B cell (primary cell): ENCODE measurements at regions of chr2 and their contacts with region 1.

Region 1: DNA sequence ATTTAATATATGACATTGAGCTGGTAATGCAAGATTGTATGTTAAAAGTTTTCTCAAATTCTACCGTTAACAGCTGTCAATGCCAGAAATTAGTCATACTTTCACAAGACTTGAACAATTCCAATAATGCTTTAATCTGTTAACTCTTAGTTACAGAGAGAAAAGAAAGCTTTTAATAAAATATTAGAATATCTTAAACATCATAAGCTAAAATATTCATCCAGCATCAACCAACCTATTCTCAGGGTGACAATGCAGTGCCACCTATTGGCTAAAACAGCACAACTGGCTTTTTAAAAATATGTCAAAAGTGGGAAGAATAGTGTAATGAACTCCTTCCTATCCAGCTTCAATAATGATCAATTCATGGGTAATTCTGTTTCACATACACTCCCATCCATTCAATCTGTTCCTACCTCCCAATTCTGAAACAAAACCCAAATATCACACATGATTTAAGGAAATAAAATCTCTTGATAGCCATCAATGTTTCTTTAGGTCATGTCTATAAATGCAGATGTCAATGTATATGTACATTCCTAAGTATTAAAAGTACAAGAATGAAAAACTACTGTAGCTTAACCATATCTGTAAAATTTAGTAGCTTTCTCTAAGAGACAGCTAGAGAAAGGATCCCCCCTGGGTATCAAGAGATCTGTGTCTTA is 79.8 kb upstream of the CCDC141 start:
- DNase-seq: peak; percentile 37
- ATAC-seq: no peak
- H3K4me3 ChIP-seq: no peak overlapping the region
- H3K4me3 Mint-ChIP-seq: no peak overlapping the region
- H3K27ac ChIP-seq: no peak overlapping the region
- H3K27ac Mint-ChIP-seq: no peak overlapping the region
- H3K4me1 ChIP-seq: no peaks in the 10 kb centered on the region
- H3K4me1 Mint-ChIP-seq: no peaks in the 10 kb centered on the region
- H3K27me3 ChIP-seq: no peaks in the 10 kb centered on the region
- H3K27me3 Mint-ChIP-seq: no peaks in the 10 kb centered on the region
- CTCF ChIP-seq: peak; percentile 82

Region 2: DNA sequence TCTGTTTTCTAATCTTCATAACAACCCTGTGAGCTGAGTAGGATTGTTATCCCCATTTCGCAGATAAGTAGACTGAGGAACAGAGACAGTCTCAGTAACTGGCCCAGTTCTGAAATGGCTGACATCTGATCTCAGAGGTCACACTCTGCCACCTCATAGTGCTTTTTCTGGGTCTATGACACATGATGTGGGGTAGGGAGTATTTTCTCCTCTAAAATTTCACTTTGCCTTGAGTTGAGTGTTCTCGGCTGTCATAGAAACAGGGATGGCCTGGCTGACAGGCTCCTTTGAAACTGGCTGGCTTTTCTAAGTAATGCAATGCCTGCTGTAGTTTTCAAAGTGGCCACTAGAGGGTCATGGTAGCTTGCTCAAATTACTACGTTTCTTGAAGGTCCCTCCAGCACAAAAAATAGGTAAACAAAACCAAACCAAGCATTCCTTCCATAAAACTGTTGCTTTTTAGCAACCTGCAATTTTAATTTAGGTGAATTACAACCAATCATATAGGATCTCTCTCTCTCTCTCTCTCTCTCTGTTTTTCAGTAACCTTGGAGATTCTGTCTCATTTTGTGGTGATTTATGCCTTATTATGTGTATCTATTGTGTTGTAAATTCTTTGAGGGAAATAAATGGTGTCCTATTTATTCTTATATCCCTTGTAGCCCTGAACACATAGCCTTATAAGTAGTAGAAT is 238.3 kb before region 1 on chr2:
- CTCF ChIA-PET with region 1: interaction called, 141 read pairs
- POLR2A ChIA-PET with region 1: no interaction called
- intact Hi-C with region 1: loop called (anchors 1 kb)
- DNase-seq: peak; percentile 72
- ATAC-seq: peak; percentile 61
- H3K4me3 ChIP-seq: no peak overlapping the region
- H3K4me3 Mint-ChIP-seq: no peak overlapping the region
- H3K27ac ChIP-seq: no peak overlapping the region
- H3K27ac Mint-ChIP-seq: no peak overlapping the region
- H3K4me1 ChIP-seq: no peaks in the 10 kb centered on the region
- H3K4me1 Mint-ChIP-seq: no peaks in the 10 kb centered on the region
- H3K27me3 ChIP-seq: no peaks in the 10 kb centered on the region
- H3K27me3 Mint-ChIP-seq: no peaks in the 10 kb centered on the region
- CTCF ChIP-seq: peak; percentile 98

Region 3: DNA sequence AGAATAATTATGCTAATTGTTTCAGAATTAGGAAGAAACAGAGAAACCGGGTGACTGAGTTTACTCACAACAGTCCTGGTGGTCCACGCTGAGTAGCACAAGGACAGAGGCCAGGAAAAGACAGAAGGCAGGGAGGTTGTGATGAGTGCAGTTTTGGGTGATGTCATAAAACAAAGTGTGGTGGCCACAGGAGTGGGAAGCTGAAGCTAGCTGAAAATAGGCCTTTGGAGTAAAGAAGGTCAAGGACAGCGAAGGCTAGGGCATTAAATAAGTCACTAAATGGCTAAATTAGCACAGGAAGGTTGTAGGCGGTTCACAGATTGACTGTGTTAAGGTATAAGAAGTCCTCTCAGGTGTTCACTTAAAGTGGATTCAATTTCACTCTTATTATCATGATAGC is 201.6 kb before region 1 on chr2:
- CTCF ChIA-PET with region 1: interaction called, 16 read pairs
- POLR2A ChIA-PET with region 1: no interaction called
- intact Hi-C with region 1: no loop called
- DNase-seq: no peak
- ATAC-seq: no peak
- H3K4me3 ChIP-seq: no peak overlapping the region
- H3K4me3 Mint-ChIP-seq: peak overlapping the region; percentile 8
- H3K27ac ChIP-seq: no peak overlapping the region
- H3K27ac Mint-ChIP-seq: no peak overlapping the region
- H3K4me1 ChIP-seq: no peaks in the 10 kb centered on the region
- H3K4me1 Mint-ChIP-seq: peaks cover 12% of the 10 kb centered on the region
- H3K27me3 ChIP-seq: no peaks in the 10 kb centered on the region
- H3K27me3 Mint-ChIP-seq: no peaks in the 10 kb centered on the region
- CTCF ChIP-seq: no peak

Region 4: GRCh38 chr2:178962805-178963433 is 166.8 kb before region 1 on chr2:
- CTCF ChIA-PET with region 1: interaction called, 23 read pairs
- POLR2A ChIA-PET with region 1: no interaction called
- intact Hi-C with region 1: loop called (anchors 5 kb)
- DNase-seq: peak; percentile 35
- ATAC-seq: peak; percentile 76
- H3K4me3 ChIP-seq: no peak overlapping the region
- H3K4me3 Mint-ChIP-seq: no peak overlapping the region
- H3K27ac ChIP-seq: peak overlapping the region in 1 of 2 donors; percentile 41
- H3K27ac Mint-ChIP-seq: no peak overlapping the region
- H3K4me1 ChIP-seq: peaks cover 11 to 14% of the 10 kb centered on the region in 2 donors
- H3K4me1 Mint-ChIP-seq: peaks cover 8% of the 10 kb centered on the region
- H3K27me3 ChIP-seq: no peaks in the 10 kb centered on the region
- H3K27me3 Mint-ChIP-seq: no peaks in the 10 kb centered on the region
- CTCF ChIP-seq: no peak

Region 5: GRCh38 chr2:179020156-179020750 is 109.5 kb before region 1 on chr2:
- CTCF ChIA-PET with region 1: interaction called, 44 read pairs
- POLR2A ChIA-PET with region 1: no interaction called
- intact Hi-C with region 1: loop called (anchors 2 kb)
- DNase-seq: peak; percentile 60
- ATAC-seq: peak; percentile 68
- H3K4me3 ChIP-seq: no peak overlapping the region
- H3K4me3 Mint-ChIP-seq: no peak overlapping the region
- H3K27ac ChIP-seq: peak overlapping the region; percentile 0 to 12
- H3K27ac Mint-ChIP-seq: no peak overlapping the region
- H3K4me1 ChIP-seq: peaks cover 30 to 45% of the 10 kb centered on the region in 2 donors
- H3K4me1 Mint-ChIP-seq: peaks cover 52% of the 10 kb centered on the region
- H3K27me3 ChIP-seq: no peaks in the 10 kb centered on the region
- H3K27me3 Mint-ChIP-seq: no peaks in the 10 kb centered on the region
- CTCF ChIP-seq: peak; percentile 84

Region 6: DNA sequence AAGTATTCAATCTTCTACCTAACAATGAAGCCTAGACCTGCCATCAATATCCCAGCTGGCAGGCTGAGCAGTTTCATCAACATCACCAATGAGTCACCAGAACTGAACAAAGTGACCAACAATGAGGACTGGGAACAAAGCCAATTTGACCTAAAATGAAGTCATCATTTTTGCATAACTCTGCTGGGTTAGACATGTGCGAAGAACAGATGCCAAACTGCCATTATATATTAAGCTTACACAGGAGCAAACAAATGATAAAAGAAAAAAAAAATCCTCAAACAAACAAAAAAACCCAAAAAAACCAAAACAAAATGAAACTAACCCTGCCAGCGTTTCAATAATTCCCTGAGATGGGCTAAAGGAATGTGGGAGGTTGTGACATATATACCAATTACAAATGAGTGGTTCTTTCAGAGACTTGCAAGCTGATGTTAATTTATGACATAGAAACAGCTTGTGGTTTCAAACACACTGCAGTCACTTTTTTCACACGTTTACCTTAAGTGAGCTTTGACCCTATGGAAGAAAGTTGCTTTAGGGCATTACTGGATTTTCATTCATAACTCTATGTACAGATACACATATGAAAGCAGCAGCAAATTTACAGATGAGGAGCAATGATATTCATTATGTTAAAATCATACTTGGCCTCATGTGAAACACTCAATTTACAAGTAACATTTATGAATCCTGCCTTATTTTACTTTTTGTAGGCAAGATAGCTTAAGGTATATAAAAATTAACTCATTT is 22.9 kb before region 1 on chr2:
- CTCF ChIA-PET with region 1: interaction called, 14 read pairs
- POLR2A ChIA-PET with region 1: no interaction called
- intact Hi-C with region 1: no loop called
- DNase-seq: no peak
- ATAC-seq: no peak
- H3K4me3 ChIP-seq: no peak overlapping the region
- H3K4me3 Mint-ChIP-seq: no peak overlapping the region
- H3K27ac ChIP-seq: no peak overlapping the region
- H3K27ac Mint-ChIP-seq: peak overlapping the region; percentile 34
- H3K4me1 ChIP-seq: no peaks in the 10 kb centered on the region
- H3K4me1 Mint-ChIP-seq: peaks cover 14% of the 10 kb centered on the region
- H3K27me3 ChIP-seq: no peaks in the 10 kb centered on the region
- H3K27me3 Mint-ChIP-seq: no peaks in the 10 kb centered on the region
- CTCF ChIP-seq: no peak

Region 7: GRCh38 chr2:179332904-179333303 is 203.2 kb after region 1 on chr2:
- CTCF ChIA-PET with region 1: no interaction called
- POLR2A ChIA-PET with region 1: no interaction called
- intact Hi-C with region 1: no loop called
- DNase-seq: no peak
- ATAC-seq: no peak
- H3K4me3 ChIP-seq: no peak overlapping the region
- H3K4me3 Mint-ChIP-seq: no peak overlapping the region
- H3K27ac ChIP-seq: no peak overlapping the region
- H3K27ac Mint-ChIP-seq: no peak overlapping the region
- H3K4me1 ChIP-seq: peaks cover 0 to 4% of the 10 kb centered on the region in 2 donors
- H3K4me1 Mint-ChIP-seq: peaks cover 14% of the 10 kb centered on the region
- H3K27me3 ChIP-seq: no peaks in the 10 kb centered on the region
- H3K27me3 Mint-ChIP-seq: no peaks in the 10 kb centered on the region
- CTCF ChIP-seq: no peak